MCF 10A (cell line): ENCODE measurements at regions of chrX and their contacts with region 1.

Region 1: GRCh38 chrX:2500267-2501075 is at the starts of genes DHRSX and ZBED1:
- DNase-seq: peak; percentile 20
- H3K4me3 Mint-ChIP-seq: peak within 1 kb of the TSS; percentile 74
- H3K27ac Mint-ChIP-seq: peak within 1 kb of the TSS; percentile 79
- H3K4me1 Mint-ChIP-seq: no peaks in the 10 kb centered on the region
- H3K27me3 Mint-ChIP-seq: no peaks in the 10 kb centered on the region
- CTCF ChIP-seq: no peak
- total RNA-seq, gene DHRSX: 23.9 and 26.5 TPM in 2 replicates
- total RNA-seq, gene ZBED1: 19.6 and 23.7 TPM in 2 replicates

Region 2: DNA sequence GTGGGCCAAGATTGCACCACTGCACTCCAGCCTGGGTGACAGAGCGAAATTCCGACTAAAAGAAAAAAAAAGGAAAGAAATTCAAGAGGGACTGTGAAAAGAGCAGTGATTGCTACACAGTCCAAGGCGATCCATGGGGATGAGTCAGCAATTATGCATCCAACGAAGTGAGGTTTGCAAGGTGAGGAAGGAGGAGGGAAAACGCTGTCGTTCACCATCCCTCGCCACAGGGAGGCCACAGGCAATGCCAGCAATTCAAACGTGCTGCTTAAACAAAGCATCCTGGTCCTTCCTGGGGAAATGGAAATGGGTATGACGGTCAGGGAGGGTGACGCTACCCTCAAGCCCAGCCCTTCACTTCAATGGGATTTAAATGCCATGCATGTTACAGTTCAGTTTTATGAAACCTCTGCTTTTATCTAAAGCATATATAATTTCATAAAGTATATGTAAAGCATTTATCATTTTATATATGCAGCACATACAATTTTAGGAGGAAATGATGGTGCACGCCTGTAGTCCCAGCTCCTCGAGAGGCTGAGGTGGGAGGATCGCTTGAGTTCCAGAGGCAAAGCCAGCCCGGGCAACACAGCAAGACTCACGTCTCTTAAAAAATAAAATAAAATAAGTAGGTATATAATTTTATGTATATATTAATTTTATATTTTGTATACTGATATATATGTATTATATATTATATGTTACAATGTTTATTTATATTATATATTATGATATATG is 108.4 kb before region 1 on chrX:
- CTCF ChIA-PET with region 1: no interaction called
- POLR2A ChIA-PET with region 1: no interaction called
- intact Hi-C with region 1: loop called (anchors 2 kb)
- DNase-seq: peak; percentile 97
- H3K4me3 Mint-ChIP-seq: no peak overlapping the region
- H3K27ac Mint-ChIP-seq: peak overlapping the region; percentile 23
- H3K4me1 Mint-ChIP-seq: peaks cover 6% of the 10 kb centered on the region
- H3K27me3 Mint-ChIP-seq: no peaks in the 10 kb centered on the region
- CTCF ChIP-seq: no peak

Region 3: DNA sequence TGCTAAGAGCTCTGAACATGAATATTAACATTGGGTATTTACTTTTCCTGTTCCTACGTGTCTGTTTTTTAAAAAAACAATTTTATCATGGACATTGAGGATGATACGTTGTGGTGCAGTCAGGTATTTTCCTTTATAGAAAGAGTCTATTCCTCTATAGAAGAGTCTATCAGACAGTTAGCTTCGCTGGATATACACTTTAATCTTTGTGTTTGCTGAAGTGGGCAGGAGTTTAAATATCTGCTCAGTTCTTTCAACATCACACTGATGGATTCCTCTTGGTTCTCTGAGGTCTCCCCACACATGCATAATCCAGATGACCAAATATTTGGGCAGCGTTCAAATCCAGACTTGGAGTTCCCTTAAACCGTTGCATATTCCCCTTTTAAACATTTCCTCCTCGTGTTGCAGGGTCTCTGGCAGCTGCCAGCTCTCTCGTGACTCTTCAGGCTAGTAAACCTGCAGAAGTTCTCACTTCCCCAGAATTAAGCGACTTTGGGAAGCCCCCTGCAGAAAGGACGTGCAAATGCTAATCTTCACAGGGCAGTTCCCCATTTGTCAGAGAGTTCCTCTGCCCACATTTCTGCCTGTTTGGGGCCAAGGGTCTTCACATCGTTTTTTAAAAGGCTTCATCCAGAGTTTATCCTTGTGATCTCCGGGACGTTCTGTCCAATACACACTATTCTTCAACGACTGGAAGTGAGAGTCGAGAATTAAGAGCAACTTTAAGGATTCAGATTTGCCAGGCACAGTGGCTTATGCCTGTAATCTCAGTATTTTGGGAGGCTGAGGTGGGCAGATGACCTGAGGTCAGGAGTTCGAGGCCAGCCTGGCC is 20.8 kb after region 1 on chrX:
- CTCF ChIA-PET with region 1: no interaction called
- POLR2A ChIA-PET with region 1: no interaction called
- intact Hi-C with region 1: no loop called
- DNase-seq: no peak
- H3K4me3 Mint-ChIP-seq: no peak overlapping the region
- H3K27ac Mint-ChIP-seq: no peak overlapping the region
- H3K4me1 Mint-ChIP-seq: no peaks in the 10 kb centered on the region
- H3K27me3 Mint-ChIP-seq: peaks cover 21% of the 10 kb centered on the region
- CTCF ChIP-seq: no peak

Region 4: GRCh38 chrX:2584251-2585157 is 84.0 kb after region 1 on chrX:
- CTCF ChIA-PET with region 1: no interaction called
- POLR2A ChIA-PET with region 1: no interaction called
- intact Hi-C with region 1: loop called (anchors 5 kb)
- DNase-seq: no peak
- H3K4me3 Mint-ChIP-seq: no peak overlapping the region
- H3K27ac Mint-ChIP-seq: no peak overlapping the region
- H3K4me1 Mint-ChIP-seq: no peaks in the 10 kb centered on the region
- H3K27me3 Mint-ChIP-seq: peaks cover 46% of the 10 kb centered on the region
- CTCF ChIP-seq: no peak

Region 5: DNA sequence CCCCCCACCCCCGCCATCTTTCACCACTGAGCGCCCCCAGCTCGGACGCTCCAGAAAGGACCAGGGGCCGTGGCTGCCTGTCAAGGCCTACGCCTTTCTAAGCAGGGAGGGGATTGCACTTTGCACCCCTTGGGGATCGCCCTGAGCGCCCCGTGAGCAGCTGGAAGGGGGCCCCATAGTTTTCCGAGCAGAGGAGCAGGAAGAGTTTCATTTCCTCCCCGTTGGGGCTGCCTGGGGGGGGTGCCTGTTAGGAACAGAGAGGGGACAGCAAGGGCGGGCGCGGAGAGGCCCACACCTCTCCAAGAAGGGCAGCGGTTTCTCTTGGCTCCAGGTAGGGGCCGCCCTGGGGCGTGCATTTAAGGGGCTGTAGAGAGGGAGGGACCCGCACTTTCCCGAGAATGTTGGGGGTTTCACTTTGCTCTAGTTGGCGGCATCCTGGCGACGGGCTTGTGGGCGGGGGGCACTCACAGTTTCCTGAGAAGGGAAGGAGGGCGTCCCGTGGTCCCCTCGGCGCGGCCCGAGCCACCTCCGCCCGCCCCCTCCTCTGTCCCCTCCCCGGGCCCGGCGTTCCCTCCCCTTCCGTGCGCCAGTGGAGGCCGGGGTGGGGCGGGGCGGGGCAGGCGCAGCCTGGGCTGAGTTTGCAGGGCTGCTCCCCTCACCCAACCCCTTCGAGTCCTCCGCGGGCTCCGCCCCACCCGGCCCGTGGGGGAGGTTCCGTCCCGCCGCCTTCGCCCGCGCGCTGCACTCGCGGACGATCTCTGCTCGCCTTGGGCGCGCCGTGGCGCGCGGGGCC is 108.4 kb after region 1 on chrX:
- CTCF ChIA-PET with region 1: no interaction called
- POLR2A ChIA-PET with region 1: no interaction called
- intact Hi-C with region 1: loop called (anchors 5 kb)
- DNase-seq: peak; percentile 83
- H3K4me3 Mint-ChIP-seq: peak overlapping the region; percentile 71
- H3K27ac Mint-ChIP-seq: peak overlapping the region; percentile 46
- H3K4me1 Mint-ChIP-seq: peaks cover 24% of the 10 kb centered on the region
- H3K27me3 Mint-ChIP-seq: no peaks in the 10 kb centered on the region
- CTCF ChIP-seq: no peak

Region 6: DNA sequence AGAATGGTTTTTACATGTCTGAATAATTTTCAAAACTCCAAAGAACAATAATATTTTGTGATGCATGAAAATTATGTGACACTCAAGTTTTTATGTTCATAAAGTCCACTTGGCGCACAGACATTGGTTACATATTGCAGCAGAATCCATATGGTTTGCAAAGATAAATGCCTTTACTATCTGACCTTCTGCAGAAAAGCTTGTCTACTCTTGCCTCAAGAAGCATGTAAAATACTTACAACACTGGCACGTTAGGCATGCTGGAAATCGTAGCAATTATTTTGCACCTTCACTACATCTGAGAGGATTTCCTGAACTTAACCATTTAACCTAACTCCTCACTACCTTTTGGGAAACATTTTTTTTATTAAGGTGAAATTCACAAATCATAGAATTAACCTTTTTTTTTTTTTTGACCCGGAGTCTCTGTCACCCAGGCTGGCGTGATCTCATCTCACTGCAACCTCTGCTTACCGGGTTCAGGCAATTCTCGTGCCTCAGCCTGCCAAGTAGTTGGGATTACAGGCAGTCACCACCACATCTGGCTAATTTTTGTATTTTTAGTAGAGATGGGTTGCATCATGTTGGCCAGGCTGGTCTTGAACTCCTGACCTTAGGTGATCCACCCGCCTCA is 247.8 kb after region 1 on chrX:
- CTCF ChIA-PET with region 1: no interaction called
- POLR2A ChIA-PET with region 1: no interaction called
- intact Hi-C with region 1: no loop called
- DNase-seq: no peak
- H3K4me3 Mint-ChIP-seq: no peak overlapping the region
- H3K27ac Mint-ChIP-seq: no peak overlapping the region
- H3K4me1 Mint-ChIP-seq: no peaks in the 10 kb centered on the region
- H3K27me3 Mint-ChIP-seq: no peaks in the 10 kb centered on the region
- CTCF ChIP-seq: no peak